ENCODE measurements at regions of chr15 and their contacts with region 1.

Region 1: DNA sequence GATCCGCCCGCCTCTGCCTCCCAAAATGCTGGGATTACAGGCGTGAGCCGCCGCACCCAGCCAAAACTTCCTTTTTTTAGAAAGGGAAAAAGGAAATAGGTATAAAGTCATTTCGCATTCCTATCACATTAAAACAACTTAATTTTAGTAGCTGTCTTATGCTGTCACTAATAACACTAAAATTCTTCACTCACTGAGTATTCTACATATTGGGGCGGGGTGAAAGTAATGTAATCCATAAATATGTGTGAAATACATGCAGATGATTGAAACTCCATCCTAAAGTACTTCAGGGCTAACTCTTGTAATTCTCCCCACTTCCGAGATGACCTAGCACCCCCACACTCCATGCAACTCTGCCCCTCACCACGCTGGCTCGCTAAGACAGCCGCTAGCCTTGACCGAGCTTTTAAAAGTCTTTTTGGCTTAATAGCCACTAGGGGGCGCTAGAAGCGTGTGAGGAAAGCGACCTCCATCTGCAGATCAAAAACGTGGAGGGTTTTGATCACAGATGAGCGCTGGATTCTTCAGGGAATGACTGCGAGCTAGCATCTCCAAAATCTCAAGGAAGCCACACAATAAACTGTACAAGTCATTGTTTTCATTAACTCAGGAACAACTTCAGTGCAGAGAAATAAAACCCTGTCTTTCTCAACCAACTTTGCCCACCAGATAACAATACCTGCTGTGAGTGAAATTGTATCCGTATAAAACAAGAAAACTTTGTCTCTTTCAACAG is 129.3 kb upstream of the IGF1R start:
- DNase-seq: peak; percentile 13 to 84 (median 31)
- ATAC-seq: peak; percentile 63
- H3K4me3 ChIP-seq: no peak overlapping the region
- H3K4me3 Mint-ChIP-seq: no peak overlapping the region
- H3K27ac ChIP-seq: no peak overlapping the region
- H3K27ac Mint-ChIP-seq: no peak overlapping the region
- H3K4me1 ChIP-seq: no peaks in the 10 kb centered on the region
- H3K4me1 Mint-ChIP-seq: peaks cover 6% of the 10 kb centered on the region
- H3K27me3 ChIP-seq: no peaks in the 10 kb centered on the region
- H3K27me3 Mint-ChIP-seq: peaks cover 8% of the 10 kb centered on the region
- CTCF ChIP-seq: peak; percentile 88

Region 2: GRCh38 chr15:98375513-98376340 is 143.3 kb before region 1 on chr15:
- CTCF ChIA-PET with region 1: no interaction called
- POLR2A ChIA-PET with region 1: no interaction called
- intact Hi-C with region 1: no loop called
- DNase-seq: no peak
- ATAC-seq: no peak
- H3K4me3 ChIP-seq: no peak overlapping the region
- H3K4me3 Mint-ChIP-seq: no peak overlapping the region
- H3K27ac ChIP-seq: no peak overlapping the region
- H3K27ac Mint-ChIP-seq: no peak overlapping the region
- H3K4me1 ChIP-seq: no peaks in the 10 kb centered on the region
- H3K4me1 Mint-ChIP-seq: no peaks in the 10 kb centered on the region
- H3K27me3 ChIP-seq: no peaks in the 10 kb centered on the region
- H3K27me3 Mint-ChIP-seq: peaks cover 23% of the 10 kb centered on the region
- CTCF ChIP-seq: no peak

Region 3: DNA sequence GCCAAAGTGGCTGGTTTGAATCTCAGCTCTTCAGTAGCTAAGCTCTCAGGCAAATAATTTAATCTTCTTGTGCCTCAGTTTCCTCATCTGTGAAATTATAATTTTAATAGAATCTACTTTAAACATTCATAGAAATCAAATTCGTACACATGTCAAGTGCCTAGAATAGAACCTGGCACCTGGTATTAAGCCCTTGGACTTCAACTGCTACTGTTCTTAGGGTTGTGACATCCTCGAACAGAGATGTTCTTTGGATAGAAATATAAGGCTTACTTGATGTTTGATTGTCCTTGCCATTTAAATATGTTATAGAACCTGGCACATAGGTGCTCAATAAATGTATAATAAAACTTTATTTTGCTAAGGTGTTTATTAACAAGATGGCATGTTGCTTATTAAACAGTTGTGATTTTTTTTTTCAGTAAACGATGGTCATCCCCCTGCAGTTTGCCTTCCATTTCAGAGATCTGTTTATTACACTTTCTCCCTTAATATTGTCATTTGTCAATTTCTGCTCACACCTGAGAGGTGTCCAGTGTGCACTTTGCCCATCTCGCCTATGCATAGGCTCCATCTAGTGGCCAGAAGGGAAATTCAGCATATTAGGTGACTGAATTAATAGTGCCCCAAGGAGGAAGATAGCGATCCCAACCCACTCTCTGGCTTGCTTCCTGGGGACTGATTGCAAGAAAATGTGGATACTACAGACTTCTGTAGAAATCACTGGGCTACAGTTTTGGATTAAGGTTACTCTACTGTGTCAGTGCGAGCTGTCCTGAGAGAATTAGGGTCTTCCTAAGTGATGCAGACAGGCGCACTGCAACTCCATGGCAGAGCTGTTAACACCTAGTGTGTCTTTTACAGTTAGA is 140.1 kb after region 1 on chr15:
- CTCF ChIA-PET with region 1: interaction called, 9 read pairs
- POLR2A ChIA-PET with region 1: interaction called, 4 read pairs
- intact Hi-C with region 1: loop called (anchors 1 kb)
- DNase-seq: peak in 7 of 14 experiments; percentile 10 to 73 (median 52)
- ATAC-seq: peak; percentile 81
- H3K4me3 ChIP-seq: no peak overlapping the region
- H3K4me3 Mint-ChIP-seq: no peak overlapping the region
- H3K27ac ChIP-seq: no peak overlapping the region
- H3K27ac Mint-ChIP-seq: no peak overlapping the region
- H3K4me1 ChIP-seq: peaks cover 9% of the 10 kb centered on the region
- H3K4me1 Mint-ChIP-seq: peaks cover 56% of the 10 kb centered on the region
- H3K27me3 ChIP-seq: no peaks in the 10 kb centered on the region
- H3K27me3 Mint-ChIP-seq: no peaks in the 10 kb centered on the region
- CTCF ChIP-seq: peak; percentile 95

Region 4: DNA sequence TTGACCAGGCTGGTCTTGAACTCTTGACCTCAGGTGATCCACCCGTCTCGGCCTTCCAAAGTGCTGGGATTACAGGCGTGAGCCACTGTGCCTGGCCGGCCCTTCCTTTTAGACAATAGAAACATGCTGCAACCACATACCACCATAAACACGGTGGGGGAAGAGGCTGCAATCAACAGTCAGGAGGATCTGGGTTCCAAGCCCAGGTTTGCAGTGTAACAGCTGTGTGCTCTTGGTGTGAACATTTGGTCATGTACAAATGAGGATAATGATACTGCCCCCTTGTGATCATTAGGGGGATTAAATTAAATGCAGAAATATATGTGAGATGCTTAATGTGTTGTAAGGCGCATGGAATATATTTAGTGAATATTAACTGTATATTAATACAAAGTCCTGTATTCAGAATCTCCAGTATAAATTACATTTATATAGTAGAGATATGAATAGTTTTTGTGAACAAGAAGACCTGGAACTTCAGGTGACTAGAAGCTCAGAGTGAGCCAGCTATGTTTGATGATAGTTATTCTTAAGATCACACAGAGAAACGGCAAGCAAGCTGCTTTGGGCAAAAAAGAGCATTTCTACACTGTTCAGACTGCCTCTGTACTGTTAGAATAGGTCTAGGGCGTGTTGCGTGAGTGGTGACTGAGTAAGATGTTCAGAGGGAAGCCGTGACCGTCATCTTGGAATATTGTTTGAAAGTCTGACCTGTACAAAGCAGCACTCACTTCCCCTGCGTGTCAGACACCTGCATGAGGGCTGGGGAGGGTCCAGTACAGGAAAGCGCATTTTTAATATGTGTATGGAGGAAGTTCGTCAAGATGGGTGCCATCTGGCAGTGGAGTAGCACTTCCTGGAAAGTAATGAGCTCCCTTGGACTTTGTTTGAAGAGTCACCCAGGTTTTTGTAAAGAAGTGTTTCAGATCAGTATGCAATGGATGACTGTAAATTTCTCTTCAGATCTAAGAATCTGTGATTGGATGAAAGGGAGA is 362.8 kb after region 1 on chr15:
- CTCF ChIA-PET with region 1: interaction called, 3 read pairs
- POLR2A ChIA-PET with region 1: no interaction called
- intact Hi-C with region 1: loop called (anchors 1 to 2 kb)
- DNase-seq: peak in 4 of 14 experiments; percentile 8 to 66 (median 55)
- ATAC-seq: no peak
- H3K4me3 ChIP-seq: no peak overlapping the region
- H3K4me3 Mint-ChIP-seq: no peak overlapping the region
- H3K27ac ChIP-seq: no peak overlapping the region
- H3K27ac Mint-ChIP-seq: peak overlapping the region; percentile 9
- H3K4me1 ChIP-seq: no peaks in the 10 kb centered on the region
- H3K4me1 Mint-ChIP-seq: peaks cover 27% of the 10 kb centered on the region
- H3K27me3 ChIP-seq: no peaks in the 10 kb centered on the region
- H3K27me3 Mint-ChIP-seq: no peaks in the 10 kb centered on the region
- CTCF ChIP-seq: peak; percentile 79

Region 5: DNA sequence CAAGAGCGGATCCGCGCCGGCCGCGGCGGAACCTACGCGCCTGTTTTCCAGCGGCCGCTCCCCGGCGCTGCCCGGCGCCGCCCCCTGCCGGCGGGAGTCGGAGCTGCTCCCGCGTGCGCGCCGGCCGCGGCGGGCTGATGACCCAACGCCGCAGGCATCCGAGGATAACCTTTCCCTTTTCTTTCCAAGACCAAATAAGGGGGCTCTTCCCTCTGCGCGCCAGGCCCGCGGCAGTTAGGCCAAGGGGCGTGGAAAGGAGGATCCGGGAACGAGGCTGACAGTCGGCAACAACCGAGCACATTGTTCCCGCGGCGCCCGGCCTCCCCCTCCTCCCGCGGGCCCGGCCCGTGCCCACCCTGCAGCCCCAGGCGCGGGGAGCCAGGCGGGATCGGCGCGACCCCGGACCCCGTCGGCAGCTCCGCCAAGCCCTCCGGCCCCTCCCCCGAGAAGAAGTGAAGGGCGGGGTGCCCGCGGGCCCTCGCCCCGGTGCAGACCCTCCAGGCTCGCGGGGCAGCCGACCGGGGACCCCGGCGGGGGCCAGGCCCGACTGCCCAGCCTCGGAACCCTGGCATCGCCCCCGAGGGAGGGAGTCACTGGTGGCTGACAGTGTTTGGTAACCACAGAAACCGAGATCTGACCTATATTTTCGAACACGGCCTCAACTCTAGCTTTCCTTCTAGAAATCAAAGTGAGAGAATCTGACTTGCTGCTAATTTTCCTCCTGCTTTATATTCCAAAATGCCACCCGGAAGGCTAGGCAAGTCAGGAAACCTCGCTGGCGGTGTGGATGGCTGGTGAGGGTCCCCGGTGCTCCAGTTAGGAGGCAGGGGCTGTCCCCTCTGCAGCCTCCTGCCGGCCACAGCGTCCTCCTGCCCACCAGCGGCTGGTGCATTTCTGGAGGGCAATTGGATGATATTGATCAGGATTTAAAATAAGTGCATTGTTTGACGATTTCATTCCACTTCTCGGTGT is 540.3 kb after region 1 on chr15:
- CTCF ChIA-PET with region 1: no interaction called
- POLR2A ChIA-PET with region 1: no interaction called
- intact Hi-C with region 1: loop called in 1 of 2 experiments (anchors 5 kb)
- DNase-seq: peak in 13 of 14 experiments; percentile 6 to 75 (median 30)
- ATAC-seq: peak; percentile 71
- H3K4me3 ChIP-seq: peak overlapping the region; percentile 45
- H3K4me3 Mint-ChIP-seq: peak overlapping the region; percentile 73
- H3K27ac ChIP-seq: no peak overlapping the region
- H3K27ac Mint-ChIP-seq: no peak overlapping the region
- H3K4me1 ChIP-seq: peaks cover 15% of the 10 kb centered on the region
- H3K4me1 Mint-ChIP-seq: no peaks in the 10 kb centered on the region
- H3K27me3 ChIP-seq: peaks cover 17 to 58% of the 10 kb centered on the region in 2 experiments
- H3K27me3 Mint-ChIP-seq: peaks cover 57% of the 10 kb centered on the region
- CTCF ChIP-seq: peak; percentile 45

Region 6: DNA sequence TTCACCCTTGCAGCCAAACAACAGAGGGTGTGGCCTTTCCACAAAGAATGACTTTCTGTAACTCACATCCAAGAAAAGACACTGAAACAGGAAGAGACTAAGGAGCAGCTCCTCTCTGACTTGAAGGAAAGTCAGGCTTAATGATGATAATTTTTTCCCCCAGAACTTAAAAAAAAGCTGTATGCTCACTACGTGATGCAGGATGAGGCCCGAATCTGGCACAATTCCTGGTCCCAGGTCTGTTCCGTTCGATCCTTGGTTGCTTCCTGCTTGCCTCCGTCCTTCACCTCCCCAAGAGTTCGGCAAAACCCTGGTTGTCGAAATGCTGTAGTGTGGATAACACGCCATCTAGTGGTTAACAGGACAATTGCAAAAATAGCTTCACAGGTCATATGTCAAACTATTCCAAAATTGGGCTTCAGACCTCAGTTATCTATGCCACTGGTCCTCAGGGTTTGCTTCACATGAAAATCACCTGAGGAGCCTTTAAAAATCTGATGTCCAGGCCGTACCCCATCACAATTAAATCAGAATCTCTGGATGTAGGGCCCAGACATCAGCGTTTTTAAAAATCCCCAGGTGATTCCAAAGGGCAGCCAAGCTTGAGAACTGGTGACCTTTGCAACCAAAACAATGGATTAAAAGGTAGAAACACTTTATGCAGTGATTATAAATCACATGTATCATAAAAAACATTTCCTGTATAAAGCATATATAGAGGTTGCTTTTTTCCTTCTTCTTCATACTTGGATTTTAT is 557.7 kb after region 1 on chr15:
- CTCF ChIA-PET with region 1: no interaction called
- POLR2A ChIA-PET with region 1: no interaction called
- intact Hi-C with region 1: loop called (anchors 2 kb)
- DNase-seq: peak in 11 of 14 experiments; percentile 6 to 77 (median 19)
- ATAC-seq: peak; percentile 76
- H3K4me3 ChIP-seq: peak overlapping the region; percentile 46
- H3K4me3 Mint-ChIP-seq: peak overlapping the region; percentile 82
- H3K27ac ChIP-seq: no peak overlapping the region
- H3K27ac Mint-ChIP-seq: no peak overlapping the region
- H3K4me1 ChIP-seq: peaks cover 4% of the 10 kb centered on the region
- H3K4me1 Mint-ChIP-seq: peaks cover 6% of the 10 kb centered on the region
- H3K27me3 ChIP-seq: no peaks in the 10 kb centered on the region
- H3K27me3 Mint-ChIP-seq: peaks cover 10% of the 10 kb centered on the region
- CTCF ChIP-seq: peak; percentile 87